MCF 10A (cell line): ENCODE measurements at regions of chr1 and their contacts with region 1.

Region 1: DNA sequence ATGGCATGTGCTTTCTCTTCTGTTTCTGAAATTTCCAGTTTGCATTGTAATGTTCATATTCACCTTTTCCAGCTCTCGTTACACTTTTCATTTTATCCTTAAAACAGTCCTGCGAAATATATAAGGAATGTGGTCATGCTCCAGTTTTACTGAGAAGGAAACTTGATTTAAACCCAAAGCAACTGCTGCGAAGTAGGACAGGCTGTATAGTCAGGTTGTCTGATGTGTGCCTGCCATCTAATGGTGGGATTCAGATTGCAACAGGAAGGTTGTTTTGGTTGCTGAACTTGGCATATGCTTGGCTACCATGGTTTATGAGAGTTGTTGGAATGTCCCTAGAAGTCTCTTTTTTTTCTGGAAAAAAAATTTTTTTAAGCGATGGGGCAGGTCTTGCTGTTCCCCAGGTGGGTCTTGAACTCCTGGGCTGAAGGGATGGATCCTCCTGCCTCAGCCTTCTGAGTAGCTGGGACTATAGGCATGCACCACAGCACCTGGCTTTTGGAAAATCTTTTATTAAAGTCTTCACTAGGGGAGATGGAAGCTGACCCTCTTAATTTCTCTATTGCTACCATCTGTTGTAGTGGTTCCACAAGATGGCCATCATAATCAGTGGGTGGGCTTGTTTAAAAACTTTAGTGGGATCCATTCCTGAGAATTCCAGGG is 86.9 kb downstream of the UCK2 start:
- DNase-seq: peak; percentile 88
- H3K4me3 Mint-ChIP-seq: no peak overlapping the region
- H3K27ac Mint-ChIP-seq: peak overlapping the region; percentile 37
- H3K4me1 Mint-ChIP-seq: peaks cover 22% of the 10 kb centered on the region
- H3K27me3 Mint-ChIP-seq: no peaks in the 10 kb centered on the region
- CTCF ChIP-seq: peak; percentile 96

Region 2: DNA sequence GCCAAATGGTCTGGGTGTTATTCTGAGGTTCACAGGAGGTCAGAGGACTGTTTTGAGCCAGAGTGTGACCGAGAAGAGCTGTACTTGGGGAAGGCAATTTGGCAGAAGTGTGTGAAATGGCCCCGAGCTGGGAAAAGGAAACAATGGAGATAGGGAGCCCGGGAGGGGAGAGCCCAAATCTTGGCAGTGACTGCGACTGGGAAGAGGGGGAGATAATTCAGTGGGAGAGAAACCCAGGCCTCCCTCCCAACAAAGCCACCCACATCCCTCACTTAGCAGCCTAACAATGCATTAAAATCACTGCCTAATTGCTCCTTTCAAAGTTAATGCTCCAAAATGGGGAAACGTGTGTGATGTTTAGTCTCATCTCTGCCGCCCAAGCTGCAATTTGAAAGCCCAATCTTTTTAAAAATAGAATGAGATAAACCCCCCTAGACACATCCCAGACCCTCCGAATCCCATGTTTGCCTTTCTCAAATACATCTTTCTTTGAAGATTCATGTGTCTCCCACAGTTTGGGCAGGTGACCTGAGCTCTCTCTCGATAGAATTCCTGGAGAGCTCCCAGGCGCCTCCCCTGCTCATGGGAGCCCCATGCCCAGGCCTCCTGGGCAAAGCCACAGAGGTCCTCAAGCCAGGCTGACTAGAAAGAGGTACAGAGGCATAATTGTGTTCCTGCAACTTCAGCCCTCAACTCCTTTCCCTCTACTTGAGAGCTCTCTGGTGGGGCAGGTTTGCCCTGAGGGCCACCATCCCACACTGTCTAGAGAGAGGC is 353.2 kb before region 1 on chr1:
- CTCF ChIA-PET with region 1: no interaction called
- POLR2A ChIA-PET with region 1: no interaction called
- intact Hi-C with region 1: no loop called
- DNase-seq: no peak
- H3K4me3 Mint-ChIP-seq: no peak overlapping the region
- H3K27ac Mint-ChIP-seq: no peak overlapping the region
- H3K4me1 Mint-ChIP-seq: no peaks in the 10 kb centered on the region
- H3K27me3 Mint-ChIP-seq: peaks cover 30% of the 10 kb centered on the region
- CTCF ChIP-seq: no peak

Region 3: DNA sequence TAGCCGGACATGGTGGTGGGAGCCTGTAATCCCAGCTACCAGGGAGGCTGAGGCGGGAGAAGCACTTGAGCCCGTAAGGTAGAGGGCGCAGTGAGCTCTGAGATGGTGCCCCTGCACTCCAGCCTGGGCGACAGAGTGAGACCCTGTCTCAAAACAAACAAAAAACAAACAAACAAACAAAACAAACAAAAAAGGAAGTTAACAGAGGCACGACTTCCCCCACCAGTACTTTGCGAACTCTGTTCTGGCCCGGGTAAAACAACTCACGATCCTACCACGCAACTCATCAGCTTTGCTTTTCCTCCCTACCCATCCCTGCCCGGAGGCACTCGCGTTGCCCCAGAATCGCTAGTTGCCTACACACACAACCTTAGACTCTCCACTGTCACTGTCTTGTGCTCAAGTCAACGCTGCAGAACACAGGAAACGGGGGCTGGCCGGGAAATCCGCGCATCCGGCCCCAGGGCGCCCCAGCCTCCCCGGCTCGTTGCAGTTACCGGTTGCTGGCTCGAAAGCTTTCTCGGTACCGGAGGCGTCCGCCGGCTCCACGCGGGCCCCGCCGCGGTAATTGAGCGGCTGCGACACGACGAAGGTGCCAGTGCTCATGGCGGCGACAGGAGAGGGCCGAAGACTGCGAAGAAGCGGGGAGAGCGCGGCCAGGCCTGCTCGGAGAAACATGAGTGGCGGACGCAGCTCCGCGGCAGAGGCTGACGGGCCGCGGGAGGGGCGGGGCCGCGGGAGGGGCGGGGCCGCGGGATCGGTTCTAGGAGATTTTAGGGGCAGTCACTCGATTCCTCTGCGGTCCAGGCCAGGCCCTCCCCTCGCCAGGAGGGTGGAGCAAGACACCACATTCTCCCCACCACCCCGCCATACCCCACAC is 216.1 kb before region 1 on chr1 and contains the start of gene ALDH9A1:
- CTCF ChIA-PET with region 1: interaction called, 11 read pairs
- POLR2A ChIA-PET with region 1: interaction called, 9 read pairs
- intact Hi-C with region 1: no loop called
- DNase-seq: peak; percentile 90
- H3K4me3 Mint-ChIP-seq: peak within 1 kb of the TSS; percentile 97
- H3K27ac Mint-ChIP-seq: peak within 1 kb of the TSS; percentile 80
- H3K4me1 Mint-ChIP-seq: peaks cover 11% of the 10 kb centered on the region
- H3K27me3 Mint-ChIP-seq: no peaks in the 10 kb centered on the region
- CTCF ChIP-seq: peak; percentile 40
- total RNA-seq, gene ALDH9A1: 56.3 and 67.1 TPM in 2 replicates

Region 4: DNA sequence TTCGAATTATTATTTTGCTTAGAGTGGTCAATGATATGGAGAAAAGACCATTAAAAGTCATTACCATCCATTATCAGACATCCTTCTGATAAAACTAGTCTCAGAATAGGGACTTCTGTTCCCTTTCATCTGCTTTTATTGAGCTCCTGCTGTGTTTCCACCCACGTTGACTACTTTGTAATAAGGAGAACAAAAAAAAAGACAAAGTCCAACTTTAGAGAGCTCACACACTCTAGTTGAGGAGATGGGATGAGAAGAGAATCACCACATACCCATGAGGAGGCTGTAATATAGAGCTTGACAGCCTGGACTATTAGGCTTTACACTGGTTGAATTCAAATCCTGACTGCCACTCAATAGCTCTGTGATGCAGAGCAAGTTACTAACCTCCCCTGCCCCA is 188.1 kb before region 1 on chr1:
- CTCF ChIA-PET with region 1: interaction called, 105 read pairs
- POLR2A ChIA-PET with region 1: no interaction called
- intact Hi-C with region 1: no loop called
- DNase-seq: no peak
- H3K4me3 Mint-ChIP-seq: no peak overlapping the region
- H3K27ac Mint-ChIP-seq: no peak overlapping the region
- H3K4me1 Mint-ChIP-seq: no peaks in the 10 kb centered on the region
- H3K27me3 Mint-ChIP-seq: no peaks in the 10 kb centered on the region
- CTCF ChIP-seq: no peak

Region 5: GRCh38 chr1:165768513-165769394 is 145.5 kb before region 1 on chr1 and contains the start of gene TMCO1:
- CTCF ChIA-PET with region 1: interaction called, 53 read pairs
- POLR2A ChIA-PET with region 1: interaction called, 17 read pairs
- intact Hi-C with region 1: loop called (anchors 1 kb)
- DNase-seq: peak; percentile 100
- H3K4me3 Mint-ChIP-seq: peak within 1 kb of the TSS; percentile 95
- H3K27ac Mint-ChIP-seq: peak within 1 kb of the TSS; percentile 98
- H3K4me1 Mint-ChIP-seq: peaks cover 46% of the 10 kb centered on the region
- H3K27me3 Mint-ChIP-seq: no peaks in the 10 kb centered on the region
- CTCF ChIP-seq: no peak
- total RNA-seq, gene TMCO1: 158 and 202 TPM in 2 replicates

Region 6: GRCh38 chr1:165884690-165885304 is 29.5 kb before region 1 on chr1:
- CTCF ChIA-PET with region 1: interaction called, 16 read pairs
- POLR2A ChIA-PET with region 1: no interaction called
- intact Hi-C with region 1: no loop called
- DNase-seq: no peak
- H3K4me3 Mint-ChIP-seq: no peak overlapping the region
- H3K27ac Mint-ChIP-seq: peak overlapping the region; percentile 32
- H3K4me1 Mint-ChIP-seq: peaks cover 70% of the 10 kb centered on the region
- H3K27me3 Mint-ChIP-seq: no peaks in the 10 kb centered on the region
- CTCF ChIP-seq: no peak